Sigmoid colon (tissue), 7 donors: ENCODE measurements at regions of chr1 and their contacts with region 1.

Region 1: GRCh38 chr1:36149237-36149972 is at the start of gene TRAPPC3:
- DNase-seq: peak; percentile 100
- H3K4me3 ChIP-seq: peak within 1 kb of the TSS; percentile 74 to 91 (median 78)
- H3K27ac ChIP-seq: peak within 1 kb of the TSS; percentile 97 to 100 (median 99)
- H3K4me1 ChIP-seq: peaks cover 0 to 61% (median 45%) of the 10 kb centered on the region in 4 donors
- H3K27me3 ChIP-seq: no peaks in the 10 kb centered on the region
- CTCF ChIP-seq: peak; percentile 84 to 97 (median 92)
- EP300 ChIP-seq: peak in 2 of 4 donors; percentile 3 to 60
- POLR2A ChIP-seq: peak; percentile 86 to 87
- total RNA-seq, gene TRAPPC3: 108 to 177 (median 129) TPM

Region 2: DNA sequence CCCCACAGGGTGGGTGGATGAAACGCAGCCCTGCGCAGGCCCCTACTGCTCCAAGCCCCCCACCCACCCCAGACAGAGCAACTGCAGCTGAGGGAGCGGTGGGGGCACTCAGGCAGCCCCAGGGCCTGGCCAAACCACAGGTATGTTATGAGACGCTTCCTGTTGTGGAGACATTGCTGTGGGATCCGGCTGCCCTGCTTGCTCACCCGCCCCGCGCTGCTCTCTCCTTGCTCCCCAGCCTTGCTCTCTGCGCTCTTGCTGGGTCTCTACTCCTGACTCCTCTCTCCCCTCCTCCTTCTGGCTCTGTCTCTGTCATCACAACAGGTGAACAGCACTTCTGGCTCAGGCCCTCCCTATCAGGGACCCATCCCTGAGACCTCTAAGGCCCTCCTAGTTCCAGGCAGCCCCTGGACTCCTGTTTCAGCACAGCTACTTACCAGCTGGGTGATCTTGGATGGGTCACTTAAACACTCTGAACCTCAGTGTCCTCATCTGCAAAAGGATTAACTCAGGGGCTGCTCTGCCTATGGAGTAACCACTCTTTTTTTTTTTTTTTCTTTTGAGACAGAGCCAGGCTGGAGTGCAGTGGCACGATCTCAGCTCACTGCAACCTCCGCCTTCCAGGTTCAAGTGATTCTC is 40.2 kb before region 1 on chr1:
- intact Hi-C with region 1: no loop called
- DNase-seq: no peak
- H3K4me3 ChIP-seq: no peak overlapping the region
- H3K27ac ChIP-seq: no peak overlapping the region
- H3K4me1 ChIP-seq: peaks cover 0 to 12% (median 5%) of the 10 kb centered on the region in 4 donors
- H3K27me3 ChIP-seq: no peaks in the 10 kb centered on the region
- CTCF ChIP-seq: no peak
- EP300 ChIP-seq: no peak
- POLR2A ChIP-seq: no peak

Region 3: GRCh38 chr1:36187800-36188593 is 38.6 kb after region 1 on chr1:
- intact Hi-C with region 1: loop called (anchors 1 kb)
- DNase-seq: peak; percentile 96
- H3K4me3 ChIP-seq: no peak overlapping the region
- H3K27ac ChIP-seq: peak overlapping the region; percentile 87 to 100 (median 94)
- H3K4me1 ChIP-seq: peaks cover 0 to 28% (median 26%) of the 10 kb centered on the region in 4 donors
- H3K27me3 ChIP-seq: no peaks in the 10 kb centered on the region
- CTCF ChIP-seq: peak; percentile 79 to 98 (median 95)
- EP300 ChIP-seq: no peak
- POLR2A ChIP-seq: no peak

Region 4: GRCh38 chr1:36285448-36286101 is 136.2 kb after region 1 on chr1:
- intact Hi-C with region 1: loop called (anchors 1 kb)
- DNase-seq: peak; percentile 82
- H3K4me3 ChIP-seq: no peak overlapping the region
- H3K27ac ChIP-seq: peak overlapping the region; percentile 20 to 71 (median 52)
- H3K4me1 ChIP-seq: peaks cover 0 to 53% (median 24%) of the 10 kb centered on the region in 4 donors
- H3K27me3 ChIP-seq: no peaks in the 10 kb centered on the region
- CTCF ChIP-seq: peak; percentile 56 to 70 (median 58)
- EP300 ChIP-seq: no peak
- POLR2A ChIP-seq: no peak

Region 5: DNA sequence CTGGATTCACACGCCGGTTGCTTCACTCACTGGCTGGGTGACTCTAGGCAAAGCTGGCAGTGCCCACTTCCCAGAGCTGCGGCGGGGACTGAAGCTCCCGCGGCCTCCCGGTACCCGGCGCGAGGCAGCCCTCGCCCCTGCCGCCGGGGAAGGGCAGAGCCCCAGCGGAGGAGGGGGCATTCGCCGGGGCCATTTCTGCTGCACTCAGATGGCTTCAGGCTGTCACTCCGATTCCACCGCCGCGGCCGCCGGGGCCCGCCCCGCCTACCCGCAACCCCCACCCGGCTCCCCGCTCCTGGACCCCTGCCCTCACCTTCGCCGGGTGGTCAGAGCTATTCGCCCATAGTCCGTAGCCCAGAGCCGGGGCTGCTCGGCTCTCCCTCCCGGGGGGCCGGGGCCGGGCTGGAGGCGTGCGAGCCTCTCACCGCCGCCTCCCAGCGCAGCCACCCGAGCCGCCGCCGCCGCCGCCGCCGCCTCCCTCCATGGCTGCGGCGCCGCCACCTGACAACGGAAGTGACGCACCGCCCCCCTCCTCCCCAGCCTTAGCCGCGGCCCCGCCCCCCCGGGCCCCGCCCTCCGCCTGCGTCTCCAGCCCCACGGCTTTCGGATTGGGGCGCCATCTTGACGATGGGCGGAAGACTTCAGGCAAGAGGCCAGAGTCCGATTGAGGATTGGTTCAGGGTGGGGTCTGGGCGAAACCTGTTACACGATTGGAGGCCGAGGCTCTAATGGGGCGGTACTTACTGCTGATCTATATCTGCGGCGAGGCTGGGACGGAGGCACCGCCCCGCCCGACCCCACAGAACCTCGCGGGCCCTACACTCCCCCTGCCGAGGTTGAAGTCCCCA is 236.2 kb after region 1 on chr1 and contains the start of gene STK40:
- intact Hi-C with region 1: loop called (anchors 5 kb)
- DNase-seq: peak; percentile 99
- H3K4me3 ChIP-seq: peak within 1 kb of the TSS; percentile 78 to 97 (median 90)
- H3K27ac ChIP-seq: peak within 1 kb of the TSS; percentile 95 to 98 (median 97)
- H3K4me1 ChIP-seq: peaks cover 0 to 77% (median 66%) of the 10 kb centered on the region in 4 donors
- H3K27me3 ChIP-seq: no peaks in the 10 kb centered on the region
- CTCF ChIP-seq: no peak
- EP300 ChIP-seq: peak in 1 of 4 donors; percentile 28
- POLR2A ChIP-seq: peak in 1 of 2 donors; percentile 7
- total RNA-seq, gene STK40: 37.1 to 49.4 (median 43.5) TPM